CD8-positive, alpha-beta T cell (primary cell): ENCODE measurements at regions of chr16 and their contacts with region 1.

Region 1: DNA sequence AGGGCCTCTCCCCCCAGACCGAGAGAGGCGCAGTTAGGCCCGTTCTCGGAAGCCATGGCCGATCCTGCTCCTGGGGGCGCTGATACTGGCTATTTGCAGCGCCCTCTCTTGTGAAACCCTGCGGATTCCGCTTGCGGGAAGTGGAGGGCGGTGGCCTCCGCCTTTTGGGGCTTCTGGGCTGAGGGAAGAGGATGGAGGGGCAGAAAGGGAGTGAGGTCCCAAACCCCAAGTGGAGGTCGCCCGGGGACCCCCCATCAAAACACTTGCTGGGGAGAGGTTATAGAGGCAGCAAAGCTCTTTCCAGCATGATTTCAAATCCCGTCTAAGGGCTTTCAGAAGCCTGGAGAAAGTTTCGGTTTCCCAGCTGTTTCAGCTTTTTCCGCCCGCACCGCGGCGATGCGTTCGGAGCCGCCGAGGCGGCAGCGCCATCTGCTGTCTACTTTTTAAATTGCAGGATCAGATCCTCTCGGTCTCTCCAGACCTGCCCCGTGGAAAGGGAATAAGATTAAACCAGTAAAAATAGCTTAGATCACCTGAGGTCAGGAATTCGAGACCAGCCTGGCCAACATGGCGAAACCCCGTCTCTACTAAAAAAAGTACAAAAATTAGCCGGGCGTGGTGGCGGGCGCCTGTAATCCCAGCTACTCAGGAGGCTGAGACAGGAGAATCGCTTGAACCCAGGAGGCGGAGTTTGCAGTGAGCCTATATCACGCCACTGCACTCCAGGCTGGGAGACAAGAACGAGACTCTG is 15.8 kb downstream of the SNX20 start:
- DNase-seq: peak; percentile 70 to 92 (median 83)
- ATAC-seq: peak; percentile 73
- H3K4me3 ChIP-seq: peak overlapping the region; percentile 39 to 57
- H3K4me3 Mint-ChIP-seq: peak overlapping the region; percentile 82
- H3K27ac ChIP-seq: peak overlapping the region in 1 of 2 experiments; percentile 46
- H3K27ac Mint-ChIP-seq: no peak overlapping the region
- H3K4me1 ChIP-seq: peaks cover 21% of the 10 kb centered on the region
- H3K4me1 Mint-ChIP-seq: peaks cover 36% of the 10 kb centered on the region
- H3K27me3 ChIP-seq: no peaks in the 10 kb centered on the region
- H3K27me3 Mint-ChIP-seq: no peaks in the 10 kb centered on the region
- CTCF ChIP-seq: peak; percentile 93

Region 2: DNA sequence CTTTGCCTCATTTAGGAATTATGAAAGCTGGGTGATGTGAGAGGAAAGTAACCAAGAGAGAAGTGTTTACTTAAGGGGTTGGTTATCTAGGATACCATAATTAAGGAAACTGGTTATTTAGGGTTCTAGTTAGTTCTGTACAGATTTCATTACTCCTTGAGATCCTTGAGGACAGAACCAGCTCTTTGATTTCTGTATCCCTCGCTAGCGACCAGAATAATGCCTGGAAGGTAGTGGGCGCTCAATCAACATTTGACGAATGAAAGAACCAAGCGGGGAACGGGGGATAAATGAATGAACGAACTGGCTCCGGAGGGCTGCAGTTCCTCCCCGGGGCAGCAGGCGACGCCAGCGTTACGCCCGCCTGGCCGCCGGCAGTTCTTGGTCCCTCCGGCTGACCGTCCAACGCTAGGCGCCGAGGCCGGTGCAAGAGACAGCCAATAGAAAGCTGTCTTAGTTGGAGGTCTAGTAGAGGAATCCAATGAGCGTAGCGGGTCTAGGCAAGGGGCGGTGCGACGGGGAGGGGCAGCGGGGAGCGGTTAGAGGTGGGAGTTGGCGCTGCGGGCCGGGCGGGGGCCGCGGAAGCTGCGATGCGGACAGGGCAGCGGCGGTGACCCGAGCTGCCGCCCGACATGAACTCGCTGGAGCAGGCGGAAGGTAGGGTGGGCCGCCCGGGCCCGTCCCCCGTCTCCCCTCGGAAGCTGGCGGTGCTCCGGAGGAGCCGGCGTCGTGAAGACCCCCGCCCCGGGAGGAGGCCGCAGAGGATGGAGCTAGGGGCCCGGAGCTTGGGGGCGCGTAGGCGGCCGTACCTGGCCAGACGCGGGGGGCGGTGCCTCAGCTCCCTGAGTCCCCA is 640.4 kb before region 1 on chr16 and contains the start of gene CNEP1R1:
- CTCF ChIA-PET with region 1: interaction called, 24 read pairs
- POLR2A ChIA-PET with region 1: no interaction called
- intact Hi-C with region 1: loop called (anchors 1 to 2 kb)
- DNase-seq: peak; percentile 86 to 97 (median 91)
- ATAC-seq: peak; percentile 93
- H3K4me3 ChIP-seq: peak within 1 kb of the TSS; percentile 74 to 79
- H3K4me3 Mint-ChIP-seq: peak within 1 kb of the TSS; percentile 97
- H3K27ac ChIP-seq: peak within 1 kb of the TSS; percentile 49 to 65
- H3K27ac Mint-ChIP-seq: peak within 1 kb of the TSS; percentile 94
- H3K4me1 ChIP-seq: peaks cover 17% of the 10 kb centered on the region
- H3K4me1 Mint-ChIP-seq: peaks cover 27% of the 10 kb centered on the region
- H3K27me3 ChIP-seq: no peaks in the 10 kb centered on the region
- H3K27me3 Mint-ChIP-seq: no peaks in the 10 kb centered on the region
- CTCF ChIP-seq: peak; percentile 99
- total RNA-seq, gene CNEP1R1: 37.6 to 41.0 TPM

Region 3: DNA sequence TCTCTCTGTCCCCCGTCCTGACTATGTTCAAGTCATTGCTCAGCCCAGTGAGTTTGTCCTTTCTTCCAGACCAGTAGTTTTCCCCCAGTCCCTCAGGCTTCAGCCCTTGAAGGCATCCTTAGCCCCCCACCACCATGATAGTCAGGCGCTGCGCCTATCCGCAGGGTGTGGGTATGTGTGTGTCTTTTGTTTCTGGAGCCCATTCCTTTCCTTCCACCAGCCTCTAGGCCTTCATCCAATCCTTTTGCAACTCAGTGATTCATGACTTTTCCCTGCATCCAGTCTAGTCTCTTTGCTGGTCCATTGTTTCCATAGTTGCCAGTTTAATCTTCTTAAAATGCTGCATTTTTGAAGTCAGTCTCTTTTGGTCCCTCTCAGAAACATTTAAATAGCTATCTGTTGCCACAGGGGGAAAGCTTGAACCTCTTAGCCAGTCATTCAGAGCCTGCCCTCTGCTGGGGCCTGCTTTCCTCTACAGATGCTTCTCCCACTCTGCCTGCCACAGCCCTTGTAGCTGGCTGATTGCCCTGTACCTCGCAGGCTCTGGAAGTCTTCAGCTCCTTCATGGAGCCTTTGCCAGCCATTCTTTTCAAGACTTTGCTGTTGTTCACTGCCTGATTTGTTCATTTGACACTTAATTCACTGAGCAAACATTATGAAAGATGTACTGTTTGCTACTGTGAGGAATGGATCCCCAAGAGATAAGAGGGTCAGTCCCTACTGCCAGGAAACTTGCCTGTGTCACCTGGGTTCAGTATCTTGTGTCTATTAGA is 454.9 kb before region 1 on chr16:
- CTCF ChIA-PET with region 1: interaction called, 30 read pairs
- POLR2A ChIA-PET with region 1: no interaction called
- intact Hi-C with region 1: loop called (anchors 1 to 2 kb)
- DNase-seq: peak; percentile 34 to 76 (median 60)
- ATAC-seq: peak; percentile 90
- H3K4me3 ChIP-seq: no peak overlapping the region
- H3K4me3 Mint-ChIP-seq: no peak overlapping the region
- H3K27ac ChIP-seq: no peak overlapping the region
- H3K27ac Mint-ChIP-seq: peak overlapping the region; percentile 72
- H3K4me1 ChIP-seq: peaks cover 3% of the 10 kb centered on the region
- H3K4me1 Mint-ChIP-seq: peaks cover 39% of the 10 kb centered on the region
- H3K27me3 ChIP-seq: no peaks in the 10 kb centered on the region
- H3K27me3 Mint-ChIP-seq: no peaks in the 10 kb centered on the region
- CTCF ChIP-seq: peak; percentile 61

Region 4: DNA sequence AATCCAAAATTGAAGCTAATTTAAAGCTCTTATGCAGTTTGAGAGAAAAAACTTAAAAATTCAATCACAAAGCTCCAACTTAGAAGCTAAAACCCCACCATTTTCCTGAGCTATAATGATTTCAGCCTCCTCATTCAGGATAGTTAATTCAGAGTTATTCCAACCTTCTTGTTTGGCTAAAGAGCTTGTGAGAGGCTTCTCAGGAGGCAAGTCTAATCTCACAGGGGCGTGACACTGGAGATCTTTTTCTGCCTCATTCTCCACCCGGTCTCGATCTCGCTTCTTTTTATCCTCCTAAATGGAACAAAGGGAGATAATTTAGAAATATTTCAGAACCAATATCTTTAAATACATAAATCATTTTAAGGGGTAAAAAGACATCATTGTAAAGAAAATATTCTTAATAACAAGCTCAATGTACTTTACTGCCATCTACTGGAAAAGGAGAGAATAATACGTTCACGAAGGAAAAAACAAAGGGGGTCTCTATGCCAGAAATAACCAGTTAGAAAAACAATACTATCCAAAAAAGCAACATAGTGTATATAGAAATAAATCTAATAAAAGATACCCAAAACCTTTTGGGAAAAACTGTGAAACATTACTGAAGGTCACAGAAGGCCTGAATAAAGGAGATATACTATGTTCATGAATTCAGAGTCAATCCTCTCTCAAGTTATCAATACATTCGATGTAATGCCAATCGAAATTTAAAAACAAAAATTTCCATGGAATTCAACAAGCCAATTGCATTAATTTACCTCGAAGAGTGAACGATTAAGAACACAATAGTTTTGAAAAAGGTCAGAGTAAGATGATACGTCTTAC is 310.5 kb before region 1 on chr16:
- CTCF ChIA-PET with region 1: interaction called, 89 read pairs
- POLR2A ChIA-PET with region 1: no interaction called
- intact Hi-C with region 1: no loop called
- DNase-seq: peak in 2 of 9 experiments; percentile 40 to 56
- ATAC-seq: peak; percentile 47
- H3K4me3 ChIP-seq: no peak overlapping the region
- H3K4me3 Mint-ChIP-seq: no peak overlapping the region
- H3K27ac ChIP-seq: no peak overlapping the region
- H3K27ac Mint-ChIP-seq: peak overlapping the region; percentile 60
- H3K4me1 ChIP-seq: no peaks in the 10 kb centered on the region
- H3K4me1 Mint-ChIP-seq: peaks cover 38% of the 10 kb centered on the region
- H3K27me3 ChIP-seq: no peaks in the 10 kb centered on the region
- H3K27me3 Mint-ChIP-seq: no peaks in the 10 kb centered on the region
- CTCF ChIP-seq: peak; percentile 94

Region 5: GRCh38 chr16:50377001-50377400 is 288.3 kb before region 1 on chr16:
- CTCF ChIA-PET with region 1: interaction called, 24 read pairs
- POLR2A ChIA-PET with region 1: no interaction called
- intact Hi-C with region 1: loop called in 1 of 2 experiments (anchors 1 kb)
- DNase-seq: no peak
- ATAC-seq: no peak
- H3K4me3 ChIP-seq: no peak overlapping the region
- H3K4me3 Mint-ChIP-seq: no peak overlapping the region
- H3K27ac ChIP-seq: no peak overlapping the region
- H3K27ac Mint-ChIP-seq: no peak overlapping the region
- H3K4me1 ChIP-seq: no peaks in the 10 kb centered on the region
- H3K4me1 Mint-ChIP-seq: no peaks in the 10 kb centered on the region
- H3K27me3 ChIP-seq: no peaks in the 10 kb centered on the region
- H3K27me3 Mint-ChIP-seq: peaks cover 2% of the 10 kb centered on the region
- CTCF ChIP-seq: no peak

Region 6: DNA sequence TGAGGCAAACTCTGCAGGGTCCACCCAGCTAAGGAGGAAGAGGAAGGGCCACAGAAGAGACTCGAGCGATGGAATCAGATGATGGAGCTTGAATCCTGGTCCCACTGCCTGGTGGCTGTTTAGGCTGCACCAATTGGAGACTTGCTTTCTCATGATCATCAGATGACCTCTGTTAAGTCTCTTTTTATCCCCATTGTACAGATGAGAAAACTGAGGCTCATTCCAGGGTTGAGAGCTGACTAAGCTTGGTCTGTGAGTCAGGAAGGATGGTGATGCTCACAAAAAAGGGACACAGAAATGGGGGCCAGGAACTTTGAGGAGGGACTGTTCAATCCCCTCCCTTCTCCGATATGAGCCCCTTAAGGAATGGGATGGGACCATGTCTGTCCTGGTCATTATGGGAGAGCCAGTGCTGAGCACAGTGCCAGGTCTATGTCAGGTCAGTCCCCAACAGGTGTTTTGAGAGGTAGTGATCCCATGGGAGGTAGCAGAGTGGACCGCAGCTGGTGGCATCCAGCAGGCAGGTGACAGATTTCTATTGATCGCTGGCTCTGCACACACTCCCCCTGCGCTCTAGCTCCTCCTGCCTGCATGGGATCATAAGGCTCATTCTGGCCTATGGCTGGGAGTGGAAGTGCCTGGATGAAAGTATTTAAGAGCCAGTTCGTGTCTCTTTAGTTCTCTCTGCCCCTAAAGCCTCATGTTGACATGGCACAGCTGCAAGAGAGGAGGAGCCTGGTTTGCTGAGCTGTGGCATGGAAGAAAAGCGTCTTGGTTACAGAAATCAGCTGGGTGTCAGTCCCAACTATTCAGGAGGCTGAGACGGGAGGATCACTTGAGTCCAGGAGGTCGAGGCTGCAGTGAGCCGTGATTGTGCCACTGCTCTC is 11.4 kb before region 1 on chr16:
- CTCF ChIA-PET with region 1: interaction called, 13 read pairs
- POLR2A ChIA-PET with region 1: no interaction called
- intact Hi-C with region 1: no loop called
- DNase-seq: no peak
- ATAC-seq: no peak
- H3K4me3 ChIP-seq: no peak overlapping the region
- H3K4me3 Mint-ChIP-seq: no peak overlapping the region
- H3K27ac ChIP-seq: no peak overlapping the region
- H3K27ac Mint-ChIP-seq: no peak overlapping the region
- H3K4me1 ChIP-seq: no peaks in the 10 kb centered on the region
- H3K4me1 Mint-ChIP-seq: no peaks in the 10 kb centered on the region
- H3K27me3 ChIP-seq: no peaks in the 10 kb centered on the region
- H3K27me3 Mint-ChIP-seq: no peaks in the 10 kb centered on the region
- CTCF ChIP-seq: no peak

Region 7: GRCh38 chr16:50806099-50807062 is 141.1 kb after region 1 on chr16:
- CTCF ChIA-PET with region 1: interaction called, 137 read pairs
- POLR2A ChIA-PET with region 1: no interaction called
- intact Hi-C with region 1: loop called (anchors 1 to 5 kb)
- DNase-seq: peak; percentile 69 to 93 (median 86)
- ATAC-seq: peak; percentile 96
- H3K4me3 ChIP-seq: peak overlapping the region; percentile 36 to 38
- H3K4me3 Mint-ChIP-seq: peak overlapping the region; percentile 81
- H3K27ac ChIP-seq: no peak overlapping the region
- H3K27ac Mint-ChIP-seq: peak overlapping the region; percentile 88
- H3K4me1 ChIP-seq: peaks cover 3% of the 10 kb centered on the region
- H3K4me1 Mint-ChIP-seq: peaks cover 11% of the 10 kb centered on the region
- H3K27me3 ChIP-seq: no peaks in the 10 kb centered on the region
- H3K27me3 Mint-ChIP-seq: no peaks in the 10 kb centered on the region
- CTCF ChIP-seq: peak; percentile 96